Naive thymus-derived CD4-positive, alpha-beta T cell (primary cell): ENCODE measurements at regions of chr5 and their contacts with region 1.

Region 1: GRCh38 chr5:1724822-1725643 is 74.6 kb downstream of the MRPL36 start:
- DNase-seq: peak in 4 of 9 donors; percentile 8 to 25 (median 19)
- ATAC-seq: no peak
- H3K4me3 ChIP-seq: peak overlapping the region; percentile 23
- H3K4me3 Mint-ChIP-seq: peak overlapping the region; percentile 51 to 86 (median 72)
- H3K27ac ChIP-seq: no peak overlapping the region
- H3K27ac Mint-ChIP-seq: peak overlapping the region in 1 of 9 donors; percentile 67
- H3K4me1 ChIP-seq: no peaks in the 10 kb centered on the region
- H3K4me1 Mint-ChIP-seq: peaks cover 0 to 7% (median 0%) of the 10 kb centered on the region in 7 donors
- H3K27me3 ChIP-seq: no peaks in the 10 kb centered on the region
- H3K27me3 Mint-ChIP-seq: peaks cover 0 to 34% (median 6%) of the 10 kb centered on the region in 5 donors

Region 2: DNA sequence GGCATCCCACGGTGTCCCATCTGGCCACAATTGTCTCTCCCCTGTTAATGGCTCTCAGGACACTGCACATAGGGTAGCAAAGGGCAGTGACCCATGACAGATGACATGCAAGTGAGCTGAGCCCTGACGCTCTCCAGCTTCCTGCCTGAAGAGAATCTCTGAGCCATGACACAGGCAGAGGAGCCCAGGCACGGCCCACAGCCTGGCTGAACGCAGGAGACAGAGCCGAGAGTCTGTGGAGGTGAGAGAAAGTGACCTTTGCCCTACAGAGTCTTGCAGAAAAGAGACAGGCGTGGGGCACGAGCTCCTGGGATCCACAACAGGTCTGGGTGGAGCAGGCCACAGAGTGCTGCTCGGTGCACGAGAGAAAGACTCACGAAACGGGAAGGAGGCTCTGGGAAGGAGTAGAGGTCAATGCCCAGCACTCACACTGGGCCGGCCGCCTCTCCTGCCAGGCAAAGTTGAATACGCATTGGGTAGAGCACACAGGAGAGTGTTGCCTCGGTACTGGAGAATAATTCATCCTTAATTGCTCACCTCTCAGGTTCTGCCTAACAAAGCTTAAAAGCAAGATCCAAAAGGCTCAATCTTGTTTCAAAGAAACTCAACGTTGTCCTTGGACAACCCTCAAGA is 15.7 kb before region 1 on chr5:
- CTCF ChIA-PET with region 1: no interaction called
- POLR2A ChIA-PET with region 1: no interaction called
- intact Hi-C with region 1: loop called in 1 of 2 experiments (anchors 1 kb)
- DNase-seq: peak in 1 of 9 donors; percentile 10
- ATAC-seq: no peak
- H3K4me3 ChIP-seq: no peak overlapping the region
- H3K4me3 Mint-ChIP-seq: peak overlapping the region; percentile 63 to 90 (median 80)
- H3K27ac ChIP-seq: no peak overlapping the region
- H3K27ac Mint-ChIP-seq: peak overlapping the region; percentile 59 to 89 (median 86)
- H3K4me1 ChIP-seq: no peaks in the 10 kb centered on the region
- H3K4me1 Mint-ChIP-seq: peaks cover 7 to 16% (median 11%) of the 10 kb centered on the region in 7 donors
- H3K27me3 ChIP-seq: no peaks in the 10 kb centered on the region
- H3K27me3 Mint-ChIP-seq: peaks cover 4 to 36% (median 7%) of the 10 kb centered on the region in 5 donors